B cell (primary cell): ENCODE measurements at regions of chr6 and their contacts with region 1.

Region 1: GRCh38 chr6:116667623-116668022 is 943 bp downstream of the ZUP1 start:
- DNase-seq: peak; percentile 76
- ATAC-seq: peak; percentile 52
- H3K4me3 ChIP-seq: peak overlapping the region; percentile 73 to 96 (median 91)
- H3K4me3 Mint-ChIP-seq: peak overlapping the region; percentile 100
- H3K27ac ChIP-seq: peak overlapping the region; percentile 88 to 92
- H3K27ac Mint-ChIP-seq: peak overlapping the region; percentile 61
- H3K4me1 ChIP-seq: peaks cover 15 to 26% of the 10 kb centered on the region in 2 donors
- H3K4me1 Mint-ChIP-seq: peaks cover 36% of the 10 kb centered on the region
- H3K27me3 ChIP-seq: no peaks in the 10 kb centered on the region
- H3K27me3 Mint-ChIP-seq: peaks cover 11% of the 10 kb centered on the region
- CTCF ChIP-seq: no peak

Region 2: GRCh38 chr6:116531675-116532570 is 135.7 kb before region 1 on chr6:
- CTCF ChIA-PET with region 1: no interaction called
- POLR2A ChIA-PET with region 1: no interaction called
- intact Hi-C with region 1: no loop called
- DNase-seq: peak; percentile 82
- ATAC-seq: peak; percentile 98
- H3K4me3 ChIP-seq: no peak overlapping the region
- H3K4me3 Mint-ChIP-seq: no peak overlapping the region
- H3K27ac ChIP-seq: no peak overlapping the region
- H3K27ac Mint-ChIP-seq: no peak overlapping the region
- H3K4me1 ChIP-seq: peaks cover 0 to 5% of the 10 kb centered on the region in 2 donors
- H3K4me1 Mint-ChIP-seq: peaks cover 11% of the 10 kb centered on the region
- H3K27me3 ChIP-seq: no peaks in the 10 kb centered on the region
- H3K27me3 Mint-ChIP-seq: peaks cover 3% of the 10 kb centered on the region
- CTCF ChIP-seq: peak; percentile 90

Region 3: GRCh38 chr6:116695401-116695800 is 27.8 kb after region 1 on chr6:
- CTCF ChIA-PET with region 1: no interaction called
- POLR2A ChIA-PET with region 1: no interaction called
- intact Hi-C with region 1: loop called (anchors 1 kb)
- DNase-seq: peak; percentile 65
- ATAC-seq: peak; percentile 67
- H3K4me3 ChIP-seq: no peak overlapping the region
- H3K4me3 Mint-ChIP-seq: no peak overlapping the region
- H3K27ac ChIP-seq: peak overlapping the region in 1 of 2 donors; percentile 71
- H3K27ac Mint-ChIP-seq: no peak overlapping the region
- H3K4me1 ChIP-seq: peaks cover 0 to 10% of the 10 kb centered on the region in 2 donors
- H3K4me1 Mint-ChIP-seq: peaks cover 27% of the 10 kb centered on the region
- H3K27me3 ChIP-seq: no peaks in the 10 kb centered on the region
- H3K27me3 Mint-ChIP-seq: no peaks in the 10 kb centered on the region
- CTCF ChIP-seq: no peak